ENCODE measurements at regions of chr19 and their contacts with region 1.

Region 1: GRCh38 chr19:16319481-16319880 is 5.1 kb upstream of the KLF2 start:
- DNase-seq: no peak
- ATAC-seq: no peak
- H3K4me3 ChIP-seq: no peak overlapping the region
- H3K27ac ChIP-seq: no peak overlapping the region
- H3K4me1 ChIP-seq: peaks cover 22% of the 10 kb centered on the region
- H3K27me3 ChIP-seq: no peaks in the 10 kb centered on the region
- CTCF ChIP-seq: no peak

Region 2: DNA sequence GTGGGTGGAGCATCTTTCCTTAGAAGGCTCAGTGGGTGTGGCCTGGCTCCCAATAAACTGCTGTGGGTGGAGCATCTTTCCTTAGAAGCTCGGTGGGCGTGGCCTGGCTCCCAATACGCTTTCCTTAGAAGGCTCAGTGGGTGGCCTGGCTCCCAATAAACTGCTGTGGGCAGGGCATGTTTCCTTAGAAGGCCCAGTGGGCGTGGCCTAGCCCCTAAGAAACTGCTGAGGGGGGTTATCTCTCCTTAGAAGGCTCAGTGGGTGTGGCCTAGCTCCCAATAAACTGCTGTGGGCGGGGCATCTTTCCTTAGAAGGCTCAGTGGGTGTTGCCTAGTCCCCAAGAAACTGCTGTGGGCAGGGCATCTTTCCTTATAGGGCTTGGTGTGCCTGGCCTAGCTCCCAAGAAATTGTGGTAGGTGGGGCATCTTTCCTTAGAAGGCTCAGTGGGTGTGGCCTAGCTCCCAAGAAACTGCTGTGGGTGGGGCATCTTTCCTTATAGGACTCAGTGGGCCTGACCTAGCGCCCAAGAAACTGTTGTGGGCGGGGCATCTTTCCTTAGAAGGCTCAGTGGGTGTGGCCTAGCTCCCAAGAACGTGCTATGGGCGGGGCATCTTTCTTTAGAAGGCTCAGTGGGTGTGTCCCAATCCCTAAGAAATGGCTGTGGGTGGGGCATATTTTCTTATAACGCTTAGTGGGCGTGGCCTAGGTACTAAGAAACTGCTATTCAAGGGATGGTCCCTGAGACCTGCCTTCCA is 165.7 kb before region 1 on chr19:
- intact Hi-C with region 1: no loop called
- DNase-seq: no peak
- ATAC-seq: no peak
- H3K4me3 ChIP-seq: no peak overlapping the region
- H3K27ac ChIP-seq: no peak overlapping the region
- H3K4me1 ChIP-seq: no peaks in the 10 kb centered on the region
- H3K27me3 ChIP-seq: peaks cover 0 to 3% (median 0%) of the 10 kb centered on the region in 3 donors
- CTCF ChIP-seq: no peak

Region 3: DNA sequence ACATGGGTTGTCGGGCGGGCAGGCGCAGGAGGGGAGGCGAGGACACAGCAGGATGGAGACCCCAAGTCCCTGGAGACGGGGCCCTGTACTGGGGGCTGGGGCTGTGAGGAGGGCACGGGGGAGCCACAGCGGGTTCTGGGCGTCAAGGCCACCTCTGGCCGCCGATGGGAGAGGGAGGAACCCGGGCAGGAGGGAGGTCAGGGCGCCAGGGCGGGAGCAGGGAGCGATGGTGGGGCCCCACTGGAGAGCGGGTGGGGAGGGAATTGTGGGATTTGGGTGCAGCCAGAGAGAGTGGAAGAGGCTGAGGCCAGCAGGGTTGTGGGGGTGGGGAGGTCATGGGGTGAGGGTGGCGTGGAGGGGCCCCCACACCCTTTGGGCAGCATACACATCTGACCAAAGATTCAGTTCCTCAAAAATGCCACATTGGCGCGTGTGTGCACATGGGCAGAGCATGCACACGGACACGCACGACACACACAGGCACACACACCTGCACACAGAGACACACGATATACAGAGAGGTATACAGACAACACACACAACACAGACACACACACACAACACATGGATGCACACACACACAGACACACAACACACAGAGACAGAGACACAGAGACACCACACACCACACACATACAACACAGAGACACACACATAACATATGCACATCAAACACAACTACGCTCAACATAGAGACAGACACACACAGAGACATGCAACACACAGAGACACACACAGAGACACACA is 66.8 kb before region 1 on chr19:
- intact Hi-C with region 1: loop called in 1 of 2 experiments (anchors 2 kb)
- DNase-seq: peak in 1 of 2 donors; percentile 57
- ATAC-seq: peak in 1 of 4 donors; percentile 17
- H3K4me3 ChIP-seq: no peak overlapping the region
- H3K27ac ChIP-seq: no peak overlapping the region
- H3K4me1 ChIP-seq: no peaks in the 10 kb centered on the region
- H3K27me3 ChIP-seq: no peaks in the 10 kb centered on the region
- CTCF ChIP-seq: no peak